GM13977 (cell line): ENCODE measurements at regions of chr9 and their contacts with region 1.

Region 1: DNA sequence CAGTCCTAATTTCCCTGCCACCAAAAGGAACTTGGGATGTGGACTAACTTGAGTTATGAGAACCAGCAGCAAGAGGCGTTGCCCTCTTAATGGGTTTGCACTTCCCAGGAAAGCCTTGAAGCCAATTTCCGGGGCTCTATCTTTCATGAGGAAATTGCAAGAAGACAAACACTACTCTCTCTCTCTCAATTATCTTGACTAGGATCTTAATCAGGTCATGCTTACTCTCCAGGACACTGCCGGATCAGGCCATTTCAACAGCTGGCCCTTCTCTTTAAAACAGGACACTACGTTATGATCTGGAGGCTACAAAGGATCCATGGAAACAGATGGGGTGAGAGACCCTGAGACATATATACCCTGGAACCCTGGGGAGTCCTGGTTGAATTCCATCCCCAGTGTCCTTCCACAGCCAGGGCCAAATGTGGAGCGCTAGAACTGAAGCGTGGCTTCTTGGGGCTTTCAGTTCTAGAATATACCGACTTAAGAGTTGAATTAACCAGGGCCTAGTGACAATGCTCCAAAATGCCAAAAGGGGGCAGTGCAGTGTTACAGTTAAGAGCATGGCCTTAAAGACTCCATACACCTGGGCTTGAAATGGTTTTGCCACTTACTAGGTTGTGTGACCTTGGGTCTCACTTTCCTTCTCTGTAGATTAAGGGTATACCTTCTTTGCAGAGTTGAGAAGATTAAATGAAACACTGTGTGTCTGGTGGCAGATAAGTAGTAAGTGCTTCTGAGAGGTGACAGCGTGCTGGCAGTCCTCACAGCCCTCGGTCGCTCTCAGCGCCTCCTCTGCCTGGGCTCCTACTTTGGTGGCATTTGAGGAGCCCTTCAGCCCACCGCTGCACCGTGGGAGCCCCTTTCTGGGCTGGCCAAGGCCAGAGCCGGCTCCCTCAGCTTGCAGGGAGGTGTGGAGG is 21.1 kb downstream of the FAM219A start:
- DNase-seq: peak; percentile 81
- CTCF ChIP-seq: peak; percentile 92

Region 2: DNA sequence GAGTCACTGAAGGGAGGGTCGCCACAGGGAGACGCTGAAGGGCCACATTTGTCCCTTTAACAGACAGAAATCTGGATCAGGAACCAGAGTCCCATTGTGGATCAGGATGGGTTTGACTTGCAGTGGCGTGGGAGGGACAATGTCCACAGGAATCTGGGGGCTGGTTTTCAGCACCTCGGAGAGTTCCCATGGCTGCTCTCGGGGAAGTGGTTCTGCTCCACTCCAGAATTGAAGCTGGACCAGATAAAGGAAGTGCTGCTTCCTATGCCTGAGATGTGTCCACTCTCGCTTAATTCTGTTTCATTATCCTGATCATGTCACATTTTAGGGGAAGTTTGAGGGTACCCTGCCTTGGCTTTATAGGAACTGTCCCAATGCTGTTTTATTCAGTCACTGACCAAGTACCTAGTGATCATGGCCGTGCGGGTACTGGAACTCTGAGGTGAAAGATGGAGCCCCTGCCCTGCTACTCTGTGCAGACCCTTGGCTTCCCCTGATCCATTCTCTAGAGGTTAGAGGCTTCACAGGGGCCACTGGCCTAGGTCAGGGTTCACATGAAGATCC is 56.8 kb after region 1 on chr9:
- in situ Hi-C with region 1: loop called (anchors 10 kb)
- DNase-seq: no peak
- CTCF ChIP-seq: no peak

Region 3: GRCh38 chr9:34591248-34591916 is 154.1 kb after region 1 on chr9:
- in situ Hi-C with region 1: loop called (anchors 25 kb)
- DNase-seq: peak; percentile 95
- CTCF ChIP-seq: peak; percentile 99